ENCODE measurements at regions of chr16 and their contacts with region 1.

Region 1: GRCh38 chr16:78235168-78235800 is 135.8 kb downstream of the WWOX start:
- DNase-seq: peak; percentile 75
- H3K4me3 Mint-ChIP-seq: no peak overlapping the region
- H3K27ac Mint-ChIP-seq: no peak overlapping the region
- H3K4me1 Mint-ChIP-seq: no peaks in the 10 kb centered on the region
- H3K27me3 Mint-ChIP-seq: no peaks in the 10 kb centered on the region

Region 2: GRCh38 chr16:78206623-78207223 is 28.6 kb before region 1 on chr16:
- CTCF ChIA-PET with region 1: interaction called, 10 read pairs
- intact Hi-C with region 1: no loop called
- DNase-seq: no peak
- H3K4me3 Mint-ChIP-seq: no peak overlapping the region
- H3K27ac Mint-ChIP-seq: no peak overlapping the region
- H3K4me1 Mint-ChIP-seq: no peaks in the 10 kb centered on the region
- H3K27me3 Mint-ChIP-seq: no peaks in the 10 kb centered on the region

Region 3: GRCh38 chr16:78591682-78592103 is 356.4 kb after region 1 on chr16:
- CTCF ChIA-PET with region 1: no interaction called
- intact Hi-C with region 1: no loop called
- DNase-seq: no peak
- H3K4me3 Mint-ChIP-seq: no peak overlapping the region
- H3K27ac Mint-ChIP-seq: no peak overlapping the region
- H3K4me1 Mint-ChIP-seq: no peaks in the 10 kb centered on the region
- H3K27me3 Mint-ChIP-seq: no peaks in the 10 kb centered on the region